Posterior vena cava (tissue), 2 donors: ENCODE measurements at regions of chr11 and their contacts with region 1.

Region 1: DNA sequence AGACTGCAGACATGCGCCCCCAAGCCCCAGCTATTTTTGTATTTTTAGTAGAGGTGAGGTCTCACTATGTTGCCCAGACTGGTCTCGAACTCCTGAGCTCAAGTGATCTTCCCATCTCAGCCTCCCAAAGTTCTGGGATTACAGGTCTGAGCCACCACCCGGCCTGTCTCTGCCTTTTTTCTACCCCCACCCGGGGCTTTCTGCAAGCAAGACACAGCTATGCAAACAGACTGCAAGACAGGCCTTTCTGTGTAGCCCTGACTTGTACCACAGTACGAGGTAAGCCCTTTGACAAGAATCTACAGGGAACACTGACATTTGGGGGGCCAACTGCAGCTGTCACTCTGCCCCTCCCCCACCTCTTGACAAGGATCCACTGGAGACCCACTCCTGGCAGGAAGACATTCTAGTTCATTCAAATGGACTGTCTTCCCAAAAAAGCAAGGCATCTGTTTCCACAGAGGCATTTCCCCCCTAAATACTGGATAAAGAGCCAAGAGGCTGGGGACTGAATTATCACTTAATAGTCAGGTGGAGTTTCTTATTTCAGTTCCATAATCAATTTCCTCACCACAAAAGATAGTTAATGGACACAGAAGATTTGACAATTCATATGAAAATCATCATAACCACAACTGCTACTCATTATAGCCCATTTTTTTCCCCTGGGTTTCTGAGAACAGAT is 118.2 kb downstream of the ABTB2 start:
- DNase-seq: no peak

Region 2: GRCh38 chr11:34053161-34053692 is 186.4 kb before region 1 on chr11:
- intact Hi-C with region 1: no loop called
- DNase-seq: peak; percentile 91

Region 3: GRCh38 chr11:34266090-34266912 is 26.7 kb after region 1 on chr11:
- intact Hi-C with region 1: loop called in 1 of 2 experiments (anchors 1 kb)
- DNase-seq: no peak

Region 4: GRCh38 chr11:34667810-34668582 is 428.4 kb after region 1 on chr11:
- intact Hi-C with region 1: no loop called
- DNase-seq: no peak